Left cardiac atrium (tissue), 4 donors: ENCODE measurements at regions of chr15 and their contacts with region 1.

Region 1: GRCh38 chr15:74127260-74127953 is 3.0 kb upstream of the ISLR2 start:
- DNase-seq: peak; percentile 91
- ATAC-seq: peak; percentile 96 to 97

Region 2: GRCh38 chr15:73717802-73718201 is 409.6 kb before region 1 on chr15:
- intact Hi-C with region 1: no loop called
- DNase-seq: no peak
- ATAC-seq: no peak

Region 3: DNA sequence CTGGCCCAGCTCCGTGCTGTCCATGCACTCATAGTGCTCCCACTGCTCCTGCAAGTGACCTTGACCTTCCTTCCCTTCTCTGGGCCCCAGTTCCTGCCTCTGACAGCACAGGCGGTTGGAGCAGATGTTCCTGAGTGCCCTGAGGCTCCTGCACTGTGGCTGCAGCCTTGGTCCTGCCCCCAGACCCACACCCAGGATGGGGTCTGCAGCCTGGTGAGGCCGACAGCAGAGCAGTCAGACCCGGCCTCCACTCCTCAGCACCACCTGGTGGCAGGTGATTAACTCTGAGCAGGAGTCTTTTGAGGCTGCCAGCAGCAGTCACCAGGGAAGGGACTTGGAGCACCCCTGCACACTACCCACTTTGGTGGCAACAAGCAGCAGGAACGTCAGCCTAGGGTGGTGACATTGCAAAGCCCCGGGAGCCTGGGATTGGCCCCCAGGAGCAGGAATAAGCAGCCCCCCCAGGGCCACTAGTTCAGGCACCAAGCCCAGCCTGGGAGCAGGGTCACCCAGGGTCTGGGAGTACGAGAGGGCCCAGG is 175.5 kb after region 1 on chr15:
- intact Hi-C with region 1: loop called (anchors 2 to 5 kb)
- DNase-seq: no peak
- ATAC-seq: peak; percentile 47 to 52

Region 4: DNA sequence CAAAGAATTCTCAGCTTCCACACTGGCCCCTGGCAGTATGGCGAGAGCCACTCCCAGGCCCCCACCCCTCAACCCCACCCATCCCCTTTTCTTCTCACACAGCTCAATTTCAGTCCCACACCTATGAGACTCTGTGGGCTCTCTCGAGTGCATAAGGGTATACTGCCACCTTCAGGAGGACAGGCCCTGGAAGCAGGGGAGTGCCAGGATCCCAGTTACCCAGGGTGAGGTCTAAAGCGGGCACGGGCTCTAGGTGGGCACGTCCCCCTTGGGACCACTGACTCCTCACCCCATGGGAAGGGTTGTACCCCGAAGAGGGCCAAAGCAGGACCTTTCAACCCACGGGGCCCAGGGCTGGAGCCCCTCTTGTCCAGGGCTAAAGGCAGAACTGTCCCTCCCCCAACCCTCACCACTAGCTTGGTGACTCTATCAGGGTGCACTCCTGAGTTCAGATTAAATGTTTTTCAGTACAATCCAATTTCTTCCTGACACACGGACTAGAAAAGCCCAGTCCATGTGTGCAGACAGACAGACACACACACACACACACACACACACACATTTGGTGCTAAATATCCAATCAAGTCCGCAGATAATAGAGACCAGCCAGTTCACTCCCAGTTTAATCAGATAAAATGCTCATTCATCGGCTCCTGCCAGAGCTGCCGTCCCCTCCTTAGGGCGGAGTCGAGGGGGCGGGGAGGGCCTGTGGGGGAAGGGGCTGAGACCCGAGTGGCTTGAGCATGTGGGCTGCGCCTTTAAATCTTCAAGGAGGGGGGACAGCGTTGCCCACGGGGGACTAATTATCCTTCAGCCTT is 180.6 kb after region 1 on chr15:
- intact Hi-C with region 1: loop called (anchors 2 to 5 kb)
- DNase-seq: peak; percentile 47
- ATAC-seq: peak; percentile 80 to 88

Region 5: GRCh38 chr15:74322181-74323076 is 195.0 kb after region 1 on chr15:
- intact Hi-C with region 1: loop called in 1 of 2 experiments (anchors 5 kb)
- DNase-seq: peak; percentile 69
- ATAC-seq: peak; percentile 63 to 69